ENCODE measurements at regions of chrX and their contacts with region 1.

Region 1: DNA sequence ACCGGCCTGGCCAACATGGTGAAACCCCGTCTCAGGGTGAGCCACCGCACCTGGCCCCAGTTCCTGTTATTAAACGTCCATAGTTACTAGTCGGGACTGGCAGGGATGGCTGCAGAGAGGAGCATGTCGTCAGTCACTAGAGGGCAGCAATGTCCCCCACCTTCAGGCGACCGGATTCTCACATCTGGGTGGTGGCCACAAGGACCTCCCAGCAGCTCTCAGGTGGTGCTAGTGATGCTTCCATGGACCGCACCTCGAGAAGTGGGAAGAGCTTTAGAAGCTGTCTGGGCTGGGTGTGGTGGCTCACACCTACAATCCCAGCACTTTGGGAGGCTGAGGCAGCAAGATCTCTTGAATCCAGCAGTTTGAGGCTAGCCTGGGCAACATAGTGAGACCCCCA is 13.3 kb upstream of the IL3RA start:
- DNase-seq: peak; percentile 51
- ATAC-seq: peak; percentile 96
- H3K4me3 ChIP-seq: no peak overlapping the region
- H3K27ac ChIP-seq: no peak overlapping the region
- H3K4me1 ChIP-seq: no peaks in the 10 kb centered on the region
- H3K27me3 ChIP-seq: peaks cover 0 to 3% of the 10 kb centered on the region in 2 experiments; a peak in 2 of 5 replicates
- CTCF ChIP-seq: peak; percentile 81
- EP300 ChIP-seq: no peak
- POLR2A ChIP-seq: no peak
- RAD21 ChIP-seq: peak; percentile 37; the same call in 1 of the 2 replicates

Region 2: GRCh38 chrX:1336331-1336943 is 13.1 kb after region 1 on chrX and contains the start of gene IL3RA:
- CTCF ChIA-PET with region 1: no interaction called
- POLR2A ChIA-PET with region 1: no interaction called
- in situ Hi-C with region 1: no loop called
- intact Hi-C with region 1: loop called (anchors 2 kb)
- DNase-seq: no peak
- ATAC-seq: peak; percentile 33
- H3K4me3 ChIP-seq: no peak within 1 kb of the TSS; a peak in 1 of 6 replicates
- H3K27ac ChIP-seq: no peak within 1 kb of the TSS
- H3K4me1 ChIP-seq: peaks cover 21% of the 10 kb centered on the region
- H3K27me3 ChIP-seq: no peaks in the 10 kb centered on the region
- CTCF ChIP-seq: no peak
- EP300 ChIP-seq: no peak
- POLR2A ChIP-seq: no peak
- RAD21 ChIP-seq: no peak
- total RNA-seq, gene IL3RA: not detected in 2 replicates

Measured in HepG2 (cell line).